Common myeloid progenitor, CD34-positive (primary cell): ENCODE measurements at regions of chr20 and their contacts with region 1.

Region 1: DNA sequence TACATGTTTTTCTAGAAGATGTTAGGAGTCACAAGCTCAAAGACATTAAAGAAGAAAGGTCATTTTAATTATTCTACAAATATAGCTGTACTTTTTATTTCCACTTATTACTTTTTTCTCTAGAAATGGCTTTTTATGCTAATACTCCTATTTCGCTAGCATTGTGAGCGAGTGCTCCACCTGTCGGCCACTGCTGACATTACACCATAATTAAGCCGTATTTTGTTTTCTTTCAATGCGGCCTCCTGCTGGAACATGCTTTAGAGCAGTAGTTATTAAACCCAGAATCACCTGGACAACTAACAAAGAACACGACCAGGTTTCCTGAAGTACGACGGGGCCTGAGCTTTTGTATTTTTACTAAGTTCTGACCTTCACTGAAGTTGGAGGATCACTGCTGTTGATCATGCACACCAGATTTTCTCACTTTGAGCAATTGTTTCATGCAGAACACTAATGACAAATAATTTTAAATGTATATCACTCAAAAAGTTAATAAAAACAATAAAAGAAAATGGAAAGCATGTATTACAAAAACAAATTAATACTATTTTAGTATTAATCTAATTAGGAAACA is 74.1 kb upstream of the PAK5 start:
- DNase-seq: peak; percentile 35 to 64 (median 39)
- H3K4me3 ChIP-seq: no peak overlapping the region
- H3K27ac ChIP-seq: no peak overlapping the region
- H3K4me1 ChIP-seq: no peaks in the 10 kb centered on the region
- H3K27me3 ChIP-seq: peaks cover 0 to 6% (median 3%) of the 10 kb centered on the region in 5 experiments

Region 2: GRCh38 chr20:9616833-9617489 is 296.0 kb before region 1 on chr20:
- CTCF ChIA-PET with region 1: interaction called, 13 read pairs
- POLR2A ChIA-PET with region 1: no interaction called
- DNase-seq: peak; percentile 65 to 87 (median 81)
- H3K4me3 ChIP-seq: no peak overlapping the region
- H3K27ac ChIP-seq: no peak overlapping the region
- H3K4me1 ChIP-seq: peaks cover 0 to 6% (median 0%) of the 10 kb centered on the region in 4 experiments
- H3K27me3 ChIP-seq: peaks cover 0 to 62% (median 31%) of the 10 kb centered on the region in 5 experiments

Region 3: DNA sequence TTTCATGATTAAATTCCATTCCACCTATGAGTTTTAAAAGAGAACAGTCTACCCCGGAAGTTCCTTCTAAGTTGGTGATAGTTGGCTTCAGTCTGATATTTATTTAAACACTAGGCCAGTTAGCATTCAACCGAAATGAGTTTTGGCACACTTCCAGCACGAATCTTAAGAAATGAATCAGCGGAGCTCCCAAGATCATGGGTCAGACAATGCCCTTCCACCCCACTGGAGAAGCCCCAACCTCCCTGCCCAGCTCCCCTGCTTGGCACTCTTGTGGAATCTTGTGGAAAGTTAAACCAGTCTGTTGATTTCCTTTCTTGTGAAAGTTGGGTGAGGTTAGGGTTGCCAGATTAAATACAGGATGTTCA is 456.8 kb after region 1 on chr20:
- CTCF ChIA-PET with region 1: no interaction called
- POLR2A ChIA-PET with region 1: no interaction called
- DNase-seq: no peak
- H3K4me3 ChIP-seq: no peak overlapping the region
- H3K27ac ChIP-seq: no peak overlapping the region
- H3K4me1 ChIP-seq: no peaks in the 10 kb centered on the region
- H3K27me3 ChIP-seq: peaks cover 0 to 1% (median 0%) of the 10 kb centered on the region in 5 experiments